ENCODE measurements at regions of chr1 and their contacts with region 1.

Region 1: DNA sequence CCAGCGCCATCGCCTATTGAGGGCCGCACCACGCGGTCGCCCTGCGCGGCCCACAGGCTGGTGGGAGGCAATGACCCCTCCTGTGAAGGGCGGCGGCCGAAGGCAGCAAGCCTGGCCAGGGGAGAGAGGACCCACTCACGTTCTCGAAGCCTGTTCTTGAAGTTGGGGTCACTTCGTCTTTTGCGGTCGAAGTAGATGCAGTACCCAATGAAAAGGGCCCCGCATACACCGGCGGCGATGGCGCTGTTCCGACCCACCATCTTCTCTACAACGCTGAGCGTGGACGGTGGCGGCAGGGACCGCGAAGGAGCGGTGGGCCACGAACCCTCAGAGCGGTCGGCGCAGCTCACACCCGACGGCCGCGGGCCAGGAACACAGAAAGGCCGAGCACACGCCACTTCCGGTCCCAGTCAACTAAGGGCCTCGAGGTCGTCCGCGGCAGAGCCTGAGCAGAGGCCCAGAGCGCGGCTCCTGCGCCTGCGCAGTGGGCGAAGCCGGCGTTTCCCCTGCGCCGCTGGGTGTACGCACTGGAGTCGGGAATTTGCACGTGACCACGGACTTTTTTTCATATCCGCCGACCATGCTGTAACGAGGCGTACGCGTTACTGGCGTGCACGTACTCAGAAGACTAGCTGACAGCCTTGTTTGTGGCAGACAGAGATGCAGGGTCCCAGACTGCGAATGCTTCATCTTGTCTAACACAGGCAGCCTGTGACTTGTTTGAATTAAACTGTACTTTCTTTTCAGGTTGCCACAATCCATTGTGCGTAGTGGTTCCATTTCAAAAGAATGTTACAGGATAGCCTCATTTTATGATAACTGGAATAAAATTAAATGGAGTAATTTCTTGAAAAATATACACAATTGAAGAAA is at the start of gene TOMM20:
- DNase-seq: peak; percentile 97
- ATAC-seq: peak; percentile 93
- H3K4me3 ChIP-seq: peak within 1 kb of the TSS; percentile 72 to 99 (median 89)
- H3K4me3 Mint-ChIP-seq: peak within 1 kb of the TSS; percentile 97
- H3K27ac ChIP-seq: peak within 1 kb of the TSS; percentile 84 to 95
- H3K27ac Mint-ChIP-seq: peak within 1 kb of the TSS; percentile 99
- H3K4me1 ChIP-seq: peaks cover 16 to 20% of the 10 kb centered on the region in 2 donors
- H3K4me1 Mint-ChIP-seq: peaks cover 35% of the 10 kb centered on the region
- H3K27me3 ChIP-seq: no peaks in the 10 kb centered on the region
- H3K27me3 Mint-ChIP-seq: no peaks in the 10 kb centered on the region
- CTCF ChIP-seq: no peak
- total RNA-seq, gene TOMM20: 73.5 and 77.3 TPM in 2 replicates

Region 2: GRCh38 chr1:235099001-235099400 is 29.7 kb before region 1 on chr1:
- CTCF ChIA-PET with region 1: no interaction called
- POLR2A ChIA-PET with region 1: no interaction called
- intact Hi-C with region 1: no loop called
- DNase-seq: no peak
- ATAC-seq: no peak
- H3K4me3 ChIP-seq: no peak overlapping the region
- H3K4me3 Mint-ChIP-seq: no peak overlapping the region
- H3K27ac ChIP-seq: no peak overlapping the region
- H3K27ac Mint-ChIP-seq: no peak overlapping the region
- H3K4me1 ChIP-seq: peaks cover 0 to 28% of the 10 kb centered on the region in 2 donors
- H3K4me1 Mint-ChIP-seq: peaks cover 24% of the 10 kb centered on the region
- H3K27me3 ChIP-seq: no peaks in the 10 kb centered on the region
- H3K27me3 Mint-ChIP-seq: peaks cover under 1% of the 10 kb centered on the region
- CTCF ChIP-seq: no peak

Region 3: GRCh38 chr1:235113183-235113917 is 15.3 kb before region 1 on chr1:
- CTCF ChIA-PET with region 1: no interaction called
- POLR2A ChIA-PET with region 1: no interaction called
- intact Hi-C with region 1: no loop called
- DNase-seq: no peak
- ATAC-seq: no peak
- H3K4me3 ChIP-seq: no peak overlapping the region
- H3K4me3 Mint-ChIP-seq: no peak overlapping the region
- H3K27ac ChIP-seq: no peak overlapping the region
- H3K27ac Mint-ChIP-seq: no peak overlapping the region
- H3K4me1 ChIP-seq: no peaks in the 10 kb centered on the region
- H3K4me1 Mint-ChIP-seq: no peaks in the 10 kb centered on the region
- H3K27me3 ChIP-seq: no peaks in the 10 kb centered on the region
- H3K27me3 Mint-ChIP-seq: no peaks in the 10 kb centered on the region
- CTCF ChIP-seq: no peak

Region 4: GRCh38 chr1:235328357-235329138 is 199.9 kb after region 1 on chr1 and contains the start of gene GGPS1:
- CTCF ChIA-PET with region 1: no interaction called
- POLR2A ChIA-PET with region 1: no interaction called
- intact Hi-C with region 1: loop called (anchors 1 kb)
- DNase-seq: peak; percentile 98
- ATAC-seq: peak; percentile 75
- H3K4me3 ChIP-seq: peak within 1 kb of the TSS; percentile 89 to 99 (median 99)
- H3K4me3 Mint-ChIP-seq: no peak within 1 kb of the TSS
- H3K27ac ChIP-seq: peak within 1 kb of the TSS; percentile 89 to 98
- H3K27ac Mint-ChIP-seq: no peak within 1 kb of the TSS
- H3K4me1 ChIP-seq: peaks cover 33 to 58% of the 10 kb centered on the region in 2 donors
- H3K4me1 Mint-ChIP-seq: peaks cover 53% of the 10 kb centered on the region
- H3K27me3 ChIP-seq: no peaks in the 10 kb centered on the region
- H3K27me3 Mint-ChIP-seq: no peaks in the 10 kb centered on the region
- CTCF ChIP-seq: peak; percentile 36
- total RNA-seq, gene GGPS1: 43.6 and 46.8 TPM in 2 replicates

Measured in B cell (primary cell).